ENCODE measurements at regions of chr10 and their contacts with region 1.

Region 1: GRCh38 chr10:121753726-121754476 is 155.7 kb upstream of the FGFR2 start:
- DNase-seq: peak; percentile 88
- H3K4me3 ChIP-seq: peak overlapping the region in 1 of 3 experiments; percentile 40
- H3K27ac ChIP-seq: peak overlapping the region; percentile 90
- H3K4me1 ChIP-seq: peaks cover 17% of the 10 kb centered on the region
- H3K27me3 ChIP-seq: no peaks in the 10 kb centered on the region
- CTCF ChIP-seq: peak; percentile 22 to 29
- POLR2A ChIP-seq: no peak

Region 2: DNA sequence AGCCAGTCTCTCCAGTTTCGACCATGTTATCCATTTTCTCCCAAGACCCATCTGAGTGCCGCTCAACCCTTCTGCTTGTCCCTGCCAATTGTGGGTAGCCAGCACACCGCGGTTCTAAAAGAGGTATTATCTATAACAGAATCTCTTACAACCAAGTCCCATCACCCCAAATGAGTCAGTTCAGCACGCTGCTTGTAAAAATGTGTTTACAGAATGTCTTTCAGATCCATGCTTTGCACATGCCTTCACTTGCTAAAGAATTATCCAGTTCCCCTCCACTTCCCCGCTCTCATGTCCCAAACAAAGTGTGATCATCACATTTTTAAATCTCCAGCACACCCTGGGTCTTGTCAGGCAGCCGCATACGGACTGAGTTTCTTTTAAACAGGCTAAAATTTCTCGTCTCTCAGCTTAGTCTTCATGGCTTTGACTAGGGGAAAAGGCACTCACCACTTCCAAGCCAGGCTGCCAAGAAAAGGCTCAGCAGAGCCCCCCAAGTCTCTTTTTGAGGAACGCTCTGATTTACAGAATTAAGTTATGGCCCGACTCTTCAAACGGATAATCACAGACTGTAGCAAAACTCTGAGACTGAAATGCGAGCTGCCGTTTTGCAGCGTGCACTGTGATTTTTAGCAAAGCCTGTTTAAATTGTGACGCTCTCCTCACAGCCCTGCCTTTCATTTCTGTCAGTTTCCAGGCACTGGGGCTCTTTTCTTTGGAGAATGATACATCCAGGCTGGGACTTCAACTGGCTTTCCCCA is 125.9 kb before region 1 on chr10:
- CTCF ChIA-PET with region 1: no interaction called
- POLR2A ChIA-PET with region 1: no interaction called
- dilution Hi-C with region 1: no loop called
- intact Hi-C with region 1: no loop called
- DNase-seq: no peak
- H3K4me3 ChIP-seq: no peak overlapping the region
- H3K27ac ChIP-seq: no peak overlapping the region
- H3K4me1 ChIP-seq: no peaks in the 10 kb centered on the region
- H3K27me3 ChIP-seq: no peaks in the 10 kb centered on the region
- CTCF ChIP-seq: no peak
- POLR2A ChIP-seq: no peak

Region 3: DNA sequence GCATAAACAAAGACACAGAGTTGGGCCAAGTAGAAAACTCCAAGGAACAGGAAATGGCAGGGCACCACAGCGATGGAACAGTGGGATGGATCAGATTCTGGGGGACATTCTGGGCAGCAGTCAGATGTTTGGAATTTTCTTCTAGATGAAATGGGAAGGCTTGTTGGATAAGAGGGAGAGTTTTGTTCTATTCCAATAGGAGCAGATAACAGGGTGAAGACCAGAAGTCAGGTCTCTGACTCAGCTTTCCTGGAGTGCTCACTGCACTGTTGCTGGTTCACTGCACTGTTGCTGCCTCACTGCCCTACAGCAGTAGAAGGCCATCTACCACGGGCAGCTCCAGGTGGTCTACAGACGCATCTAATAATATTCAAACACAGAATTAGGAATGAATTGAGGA is 38.3 kb after region 1 on chr10:
- CTCF ChIA-PET with region 1: interaction called, 5 read pairs
- POLR2A ChIA-PET with region 1: no interaction called
- dilution Hi-C with region 1: no loop called
- intact Hi-C with region 1: loop called (anchors 1 kb)
- DNase-seq: peak; percentile 87
- H3K4me3 ChIP-seq: peak overlapping the region in 1 of 3 experiments; percentile 29
- H3K27ac ChIP-seq: peak overlapping the region; percentile 94
- H3K4me1 ChIP-seq: peaks cover 23% of the 10 kb centered on the region
- H3K27me3 ChIP-seq: no peaks in the 10 kb centered on the region
- CTCF ChIP-seq: no peak
- POLR2A ChIP-seq: peak; percentile 46

Measured in endothelial cell of umbilical vein (primary cell).